Left ventricle myocardium superior (tissue), 1 donor: ENCODE measurements at regions of chr3 and their contacts with region 1.

Region 1: GRCh38 chr3:107574650-107575049 is 51.9 kb downstream of the BBX start:
- DNase-seq: no peak
- ATAC-seq: peak; percentile 61

Region 2: GRCh38 chr3:107660306-107660976 is 85.8 kb after region 1 on chr3:
- intact Hi-C with region 1: loop called (anchors 5 kb)
- DNase-seq: no peak
- ATAC-seq: no peak

Region 3: DNA sequence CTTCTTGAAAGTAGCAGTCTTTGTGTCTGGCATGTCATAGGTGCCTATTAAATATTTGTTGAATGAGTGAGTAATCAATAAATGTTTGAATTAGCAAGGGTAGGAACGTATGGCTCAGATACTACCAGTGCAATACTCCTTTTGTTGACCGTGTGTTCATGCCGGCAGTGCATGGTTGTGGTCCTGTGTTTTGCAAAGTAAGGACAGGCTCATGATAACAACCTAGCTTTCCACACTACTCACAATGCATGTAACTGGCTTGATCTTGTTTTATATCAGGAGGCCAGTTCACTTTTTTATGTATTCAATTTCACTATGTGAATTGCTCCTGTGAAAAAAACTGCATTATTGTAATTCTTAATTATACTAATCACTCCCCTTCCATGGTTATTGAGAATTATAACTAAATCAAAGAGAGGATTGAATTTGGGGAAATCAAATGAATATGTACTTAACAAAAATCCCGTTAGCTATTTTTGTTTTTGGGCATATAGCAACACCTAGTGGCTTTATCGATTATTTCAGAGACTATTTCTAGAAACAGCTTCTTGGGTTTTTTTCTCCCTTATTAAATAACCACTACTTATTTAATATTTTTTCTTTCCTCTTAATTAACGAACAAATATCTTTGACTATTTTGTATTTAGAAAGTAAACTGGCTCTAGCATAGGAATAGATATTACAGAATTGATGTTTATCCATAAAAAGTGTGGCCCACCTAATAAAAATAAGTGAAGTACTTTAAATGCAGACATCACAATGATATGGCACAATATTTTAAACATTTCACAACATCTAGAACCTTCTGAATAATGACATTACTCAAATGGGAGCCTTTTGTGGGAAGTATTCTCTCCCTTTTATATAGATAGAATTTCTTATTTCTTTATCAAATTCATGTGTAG is 166.6 kb after region 1 on chr3:
- intact Hi-C with region 1: loop called (anchors 10 kb)
- DNase-seq: no peak
- ATAC-seq: no peak

Region 4: DNA sequence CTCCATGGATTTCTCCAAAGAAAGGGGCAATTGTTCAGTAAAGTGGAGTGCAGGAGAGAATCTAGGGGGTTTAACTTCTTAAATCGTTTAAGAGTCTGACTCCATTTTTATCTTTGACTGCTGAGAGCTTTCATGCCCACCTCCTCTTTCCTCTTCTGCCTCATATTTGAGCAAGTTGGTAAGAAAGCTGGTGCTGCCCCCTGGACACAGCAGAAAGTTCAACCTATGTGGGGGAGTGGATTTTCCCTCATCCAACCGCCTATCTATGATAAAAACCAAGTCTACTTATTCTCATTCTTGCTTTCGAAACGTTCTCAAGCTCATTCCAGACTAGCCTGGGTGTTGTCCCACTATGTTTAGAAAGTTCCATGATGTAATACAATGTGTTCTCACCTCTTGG is 747.7 kb after region 1 on chr3:
- intact Hi-C with region 1: no loop called
- DNase-seq: no peak
- ATAC-seq: no peak